ENCODE measurements at regions of chr15 and their contacts with region 1.

Region 1: DNA sequence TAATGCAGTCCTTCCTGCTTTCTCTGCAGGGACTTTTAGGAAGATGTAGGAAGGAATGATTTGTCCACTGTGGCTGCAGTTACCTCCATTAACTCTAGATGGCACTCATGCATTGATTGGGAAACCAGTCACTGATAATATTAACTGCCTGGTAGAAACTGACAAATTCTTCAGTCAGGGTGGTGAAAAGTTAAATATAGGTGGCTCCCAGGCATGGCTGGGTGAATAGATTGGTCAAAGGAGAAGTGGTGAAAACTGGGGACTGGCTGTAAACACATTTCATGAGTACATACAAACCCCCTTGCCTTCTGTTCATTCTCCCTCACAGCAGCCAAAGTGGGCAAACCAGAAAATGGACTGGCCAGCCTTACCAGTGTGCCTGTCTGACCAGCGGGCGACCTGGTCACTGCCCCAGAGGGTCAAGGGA is 333.4 kb downstream of the THSD4 start:
- DNase-seq: peak; percentile 3 to 35 (median 17)
- H3K4me3 ChIP-seq: no peak overlapping the region
- H3K4me3 Mint-ChIP-seq: no peak overlapping the region
- H3K27ac ChIP-seq: no peak overlapping the region
- H3K27ac Mint-ChIP-seq: no peak overlapping the region
- H3K4me1 ChIP-seq: peaks cover 0 to 2% of the 10 kb centered on the region in 2 donors
- H3K4me1 Mint-ChIP-seq: no peaks in the 10 kb centered on the region
- H3K27me3 ChIP-seq: peaks cover 0 to 2% of the 10 kb centered on the region in 2 donors
- H3K27me3 Mint-ChIP-seq: peaks cover 5 to 19% (median 7%) of the 10 kb centered on the region in 3 donors
- CTCF ChIP-seq: peak; percentile 87

Region 2: DNA sequence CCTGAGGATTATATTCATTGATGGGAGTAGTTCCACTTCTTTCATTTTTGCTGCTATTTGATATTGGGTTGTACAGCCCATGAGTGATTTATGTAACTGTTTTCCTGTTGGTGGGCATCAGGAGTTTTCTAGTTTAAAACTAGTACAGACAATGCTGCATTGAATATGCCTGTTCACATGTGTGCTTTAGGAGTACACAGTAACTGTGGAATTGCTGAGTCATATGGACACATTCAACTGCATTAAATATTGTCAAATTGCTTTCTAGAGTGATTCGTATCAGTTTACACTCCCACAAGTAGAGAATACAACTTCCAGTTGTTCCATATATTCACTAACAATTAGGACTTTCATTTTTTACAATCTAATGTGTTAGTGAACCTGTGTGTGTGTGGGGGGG is 393.2 kb before region 1 on chr15:
- intact Hi-C with region 1: no loop called
- DNase-seq: no peak
- H3K4me3 ChIP-seq: no peak overlapping the region
- H3K4me3 Mint-ChIP-seq: no peak overlapping the region
- H3K27ac ChIP-seq: no peak overlapping the region
- H3K27ac Mint-ChIP-seq: no peak overlapping the region
- H3K4me1 ChIP-seq: no peaks in the 10 kb centered on the region
- H3K4me1 Mint-ChIP-seq: no peaks in the 10 kb centered on the region
- H3K27me3 ChIP-seq: no peaks in the 10 kb centered on the region
- H3K27me3 Mint-ChIP-seq: peaks cover 4 to 8% (median 5%) of the 10 kb centered on the region in 3 donors
- CTCF ChIP-seq: no peak

Region 3: DNA sequence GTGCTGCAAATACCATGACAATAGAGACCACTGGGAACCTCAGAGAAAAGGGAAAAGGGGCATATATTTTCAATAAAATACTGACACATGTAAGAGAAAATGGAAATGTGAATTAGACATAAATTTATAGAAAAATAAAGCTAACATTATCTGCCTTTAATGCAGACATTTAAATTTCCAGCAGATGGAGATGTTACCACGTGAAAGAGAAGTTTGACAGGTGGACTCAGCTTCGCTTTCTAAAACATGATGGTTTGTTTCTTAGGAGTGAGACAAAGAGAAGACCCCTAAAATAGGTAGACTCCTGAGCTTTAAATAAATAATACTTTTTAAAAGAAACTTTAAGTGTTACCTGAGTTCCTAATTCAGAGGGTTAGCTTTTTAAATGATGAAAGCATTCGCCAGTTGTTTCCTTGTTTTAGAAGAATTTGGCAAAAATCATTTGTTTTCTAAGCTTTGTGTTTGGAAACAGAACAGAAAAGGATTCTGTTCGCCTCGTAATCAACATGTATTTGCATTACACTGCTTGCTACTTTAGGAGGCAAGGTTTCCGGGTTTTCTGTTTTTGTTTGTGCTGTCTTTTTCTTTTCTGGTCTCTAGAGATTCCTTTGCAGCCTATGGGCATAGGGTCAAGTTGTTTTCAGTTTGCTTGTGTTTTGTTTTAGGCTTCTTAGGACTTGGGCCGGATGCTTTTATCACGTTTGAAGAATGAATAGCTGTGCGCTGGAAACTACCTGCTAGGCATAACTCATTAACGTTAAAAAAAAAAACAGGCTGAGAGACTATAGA is 62.1 kb before region 1 on chr15:
- intact Hi-C with region 1: no loop called
- DNase-seq: no peak
- H3K4me3 ChIP-seq: no peak overlapping the region
- H3K4me3 Mint-ChIP-seq: peak overlapping the region in 1 of 2 donors; percentile 44
- H3K27ac ChIP-seq: no peak overlapping the region
- H3K27ac Mint-ChIP-seq: no peak overlapping the region
- H3K4me1 ChIP-seq: no peaks in the 10 kb centered on the region
- H3K4me1 Mint-ChIP-seq: no peaks in the 10 kb centered on the region
- H3K27me3 ChIP-seq: peaks cover 22 to 27% of the 10 kb centered on the region in 2 donors
- H3K27me3 Mint-ChIP-seq: peaks cover 8 to 37% (median 18%) of the 10 kb centered on the region in 3 donors
- CTCF ChIP-seq: no peak

Region 4: DNA sequence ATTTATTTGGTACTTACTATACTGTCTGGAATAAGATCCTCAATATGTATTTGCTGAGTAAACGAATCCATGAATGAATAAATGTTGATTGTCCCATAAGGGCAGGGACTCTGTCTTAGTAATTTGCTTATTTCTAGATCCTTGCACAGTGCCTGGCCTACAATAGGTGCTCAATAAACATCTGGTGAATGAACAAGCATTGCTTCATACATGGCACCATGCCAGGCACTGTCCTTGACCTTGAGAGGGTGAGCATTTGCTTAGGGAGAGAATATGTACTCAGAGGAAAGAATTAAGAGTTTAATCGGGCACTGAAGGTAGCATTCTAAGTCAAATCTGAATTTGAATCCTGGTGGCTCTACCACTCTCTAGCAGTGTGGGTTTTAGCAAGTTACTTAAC is 51.3 kb before region 1 on chr15:
- intact Hi-C with region 1: no loop called
- DNase-seq: no peak
- H3K4me3 ChIP-seq: no peak overlapping the region
- H3K4me3 Mint-ChIP-seq: no peak overlapping the region
- H3K27ac ChIP-seq: no peak overlapping the region
- H3K27ac Mint-ChIP-seq: no peak overlapping the region
- H3K4me1 ChIP-seq: no peaks in the 10 kb centered on the region
- H3K4me1 Mint-ChIP-seq: no peaks in the 10 kb centered on the region
- H3K27me3 ChIP-seq: peaks cover 0 to 2% of the 10 kb centered on the region in 2 donors
- H3K27me3 Mint-ChIP-seq: peaks cover 0 to 2% (median 2%) of the 10 kb centered on the region in 3 donors
- CTCF ChIP-seq: no peak

Region 5: GRCh38 chr15:71730277-71731144 is 281.8 kb after region 1 on chr15:
- intact Hi-C with region 1: loop called (anchors 2 to 5 kb)
- DNase-seq: peak; percentile 3 to 18 (median 3)
- H3K4me3 ChIP-seq: no peak overlapping the region
- H3K4me3 Mint-ChIP-seq: no peak overlapping the region
- H3K27ac ChIP-seq: no peak overlapping the region
- H3K27ac Mint-ChIP-seq: no peak overlapping the region
- H3K4me1 ChIP-seq: no peaks in the 10 kb centered on the region
- H3K4me1 Mint-ChIP-seq: no peaks in the 10 kb centered on the region
- H3K27me3 ChIP-seq: no peaks in the 10 kb centered on the region
- H3K27me3 Mint-ChIP-seq: peaks cover 1 to 7% (median 2%) of the 10 kb centered on the region in 3 donors
- CTCF ChIP-seq: peak; percentile 63